HepG2 (cell line): ENCODE measurements at regions of chr11 and their contacts with region 1.

Region 1: GRCh38 chr11:61392981-61393595 is 701 bp downstream of the TMEM216 start:
- DNase-seq: no peak
- ATAC-seq: peak; percentile 56
- H3K4me3 ChIP-seq: peak overlapping the region; percentile 65 to 95 (median 90)
- H3K27ac ChIP-seq: peak overlapping the region; percentile 84
- H3K4me1 ChIP-seq: peaks cover 21% of the 10 kb centered on the region
- H3K27me3 ChIP-seq: no peaks in the 10 kb centered on the region
- CTCF ChIP-seq: peak; percentile 57
- EP300 ChIP-seq: no peak
- POLR2A ChIP-seq: no peak
- RAD21 ChIP-seq: no peak

Region 2: DNA sequence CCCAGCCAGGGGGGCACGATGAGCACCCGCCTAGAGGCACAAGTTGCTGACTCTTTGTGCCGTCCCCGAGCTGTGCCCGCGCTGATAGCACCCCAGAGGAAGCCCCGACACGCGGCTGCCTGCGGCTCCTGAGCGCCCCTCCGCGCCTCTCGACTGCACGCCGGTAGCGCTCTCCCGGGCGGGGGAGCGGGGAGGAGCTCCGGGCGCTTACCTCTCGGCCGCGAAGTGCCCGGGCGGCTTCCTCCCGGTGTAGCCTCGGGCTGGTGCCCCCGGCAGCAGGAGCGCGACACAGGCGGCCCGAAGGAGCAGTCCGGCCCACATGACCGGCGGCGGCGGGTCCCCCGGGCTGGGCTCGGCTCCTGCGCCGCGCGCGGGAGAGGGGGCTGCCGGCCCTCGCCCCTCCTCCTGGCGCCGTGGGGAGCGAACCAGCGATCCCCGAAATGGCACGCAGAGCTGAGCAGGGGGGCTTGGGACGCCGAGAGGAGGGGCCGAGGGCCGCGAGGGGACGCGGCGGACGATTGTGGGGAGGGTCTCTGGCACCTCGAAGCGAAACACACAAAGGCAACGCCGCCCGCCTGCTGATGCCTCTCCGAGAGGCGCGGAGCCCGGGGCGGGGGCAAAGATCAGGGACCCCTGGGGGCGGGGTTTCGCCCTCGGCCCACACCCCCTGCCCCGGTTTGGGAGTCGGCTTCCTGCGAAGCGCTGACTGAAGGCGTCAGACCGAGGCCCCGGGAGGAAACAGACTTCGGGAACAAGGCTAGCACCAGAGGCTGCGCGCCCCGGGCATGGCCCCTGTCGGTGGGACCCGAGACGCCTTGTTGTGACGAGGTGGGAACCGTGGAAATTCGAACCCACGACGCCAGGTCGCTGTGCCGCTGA is 98.1 kb before region 1 on chr11 and contains the start of gene VWCE:
- CTCF ChIA-PET with region 1: no interaction called
- POLR2A ChIA-PET with region 1: interaction called, 16 read pairs
- in situ Hi-C with region 1: no loop called
- intact Hi-C with region 1: loop called (anchors 5 kb)
- DNase-seq: peak; percentile 76
- ATAC-seq: peak; percentile 73
- H3K4me3 ChIP-seq: peak within 1 kb of the TSS; percentile 67 to 88 (median 83)
- H3K27ac ChIP-seq: peak within 1 kb of the TSS; percentile 94
- H3K4me1 ChIP-seq: peaks cover 74% of the 10 kb centered on the region
- H3K27me3 ChIP-seq: no peaks in the 10 kb centered on the region; a peak in 1 of 5 replicates
- CTCF ChIP-seq: peak; percentile 65
- EP300 ChIP-seq: no peak
- POLR2A ChIP-seq: peak; percentile 77 to 98
- RAD21 ChIP-seq: no peak; the same call in 1 of the 2 replicates
- total RNA-seq, gene VWCE: 10.4 and 27.6 TPM in 2 replicates

Region 3: GRCh38 chr11:61369372-61370219 is 23.5 kb before region 1 on chr11:
- CTCF ChIA-PET with region 1: no interaction called
- POLR2A ChIA-PET with region 1: interaction called, 14 read pairs
- in situ Hi-C with region 1: no loop called
- intact Hi-C with region 1: no loop called
- DNase-seq: peak; percentile 76
- ATAC-seq: peak; percentile 98
- H3K4me3 ChIP-seq: no peak overlapping the region
- H3K27ac ChIP-seq: peak overlapping the region; percentile 79
- H3K4me1 ChIP-seq: peaks cover 24% of the 10 kb centered on the region
- H3K27me3 ChIP-seq: no peaks in the 10 kb centered on the region
- CTCF ChIP-seq: no peak
- EP300 ChIP-seq: peak; percentile 74 to 83
- POLR2A ChIP-seq: peak; percentile 26 to 31; a peak in 2 of 4 replicates
- RAD21 ChIP-seq: no peak

Region 4: GRCh38 chr11:61403658-61404057 is 10.6 kb after region 1 on chr11:
- CTCF ChIA-PET with region 1: no interaction called
- POLR2A ChIA-PET with region 1: interaction called, 35 read pairs
- in situ Hi-C with region 1: no loop called
- intact Hi-C with region 1: no loop called
- DNase-seq: no peak
- ATAC-seq: no peak
- H3K4me3 ChIP-seq: no peak overlapping the region
- H3K27ac ChIP-seq: no peak overlapping the region
- H3K4me1 ChIP-seq: no peaks in the 10 kb centered on the region
- H3K27me3 ChIP-seq: no peaks in the 10 kb centered on the region
- CTCF ChIP-seq: no peak
- EP300 ChIP-seq: no peak
- POLR2A ChIP-seq: no peak
- RAD21 ChIP-seq: no peak

Region 5: GRCh38 chr11:61429691-61430582 is 36.8 kb after region 1 on chr11 and contains the starts of genes CPSF7 and SDHAF2:
- CTCF ChIA-PET with region 1: no interaction called
- POLR2A ChIA-PET with region 1: interaction called, 29 read pairs
- in situ Hi-C with region 1: no loop called
- intact Hi-C with region 1: no loop called
- DNase-seq: peak; percentile 89
- ATAC-seq: peak; percentile 94
- H3K4me3 ChIP-seq: peak within 1 kb of the TSS; percentile 78 to 99 (median 84)
- H3K27ac ChIP-seq: peak within 1 kb of the TSS; percentile 100
- H3K4me1 ChIP-seq: peaks cover 62% of the 10 kb centered on the region
- H3K27me3 ChIP-seq: no peaks in the 10 kb centered on the region; a peak in 2 of 5 replicates
- CTCF ChIP-seq: no peak
- EP300 ChIP-seq: no peak
- POLR2A ChIP-seq: peak; percentile 76 to 84
- RAD21 ChIP-seq: no peak
- total RNA-seq, gene CPSF7: 29.4 and 34.1 TPM in 2 replicates
- total RNA-seq, gene SDHAF2: 44.2 and 53.3 TPM in 2 replicates

Region 6: DNA sequence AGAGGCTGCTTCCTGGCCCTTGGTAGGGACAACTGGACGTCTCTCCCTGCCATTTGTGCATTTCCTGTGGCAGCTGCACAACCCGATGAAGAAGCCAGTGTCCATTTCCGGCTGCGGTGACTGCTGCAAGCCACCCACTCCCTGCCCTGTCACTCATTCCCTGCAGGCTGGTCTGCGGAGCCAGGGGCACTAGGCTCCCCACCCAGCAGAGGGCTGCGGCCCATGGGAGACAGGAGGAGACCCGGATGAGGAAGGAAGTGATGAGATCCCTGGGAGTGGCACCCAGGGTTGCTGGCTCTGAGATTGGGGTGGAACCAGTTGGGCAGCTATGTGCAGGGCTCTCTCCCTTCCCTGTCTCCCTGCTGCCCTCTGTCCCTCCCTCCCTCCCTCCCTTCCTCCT is 349.3 kb after region 1 on chr11:
- CTCF ChIA-PET with region 1: no interaction called
- POLR2A ChIA-PET with region 1: no interaction called
- in situ Hi-C with region 1: no loop called
- intact Hi-C with region 1: no loop called
- DNase-seq: no peak
- ATAC-seq: no peak
- H3K4me3 ChIP-seq: no peak overlapping the region
- H3K27ac ChIP-seq: no peak overlapping the region
- H3K4me1 ChIP-seq: peaks cover 6% of the 10 kb centered on the region
- H3K27me3 ChIP-seq: no peaks in the 10 kb centered on the region
- CTCF ChIP-seq: no peak
- EP300 ChIP-seq: no peak
- POLR2A ChIP-seq: no peak
- RAD21 ChIP-seq: no peak